ENCODE measurements at regions of chr9 and their contacts with region 1.

Region 1: DNA sequence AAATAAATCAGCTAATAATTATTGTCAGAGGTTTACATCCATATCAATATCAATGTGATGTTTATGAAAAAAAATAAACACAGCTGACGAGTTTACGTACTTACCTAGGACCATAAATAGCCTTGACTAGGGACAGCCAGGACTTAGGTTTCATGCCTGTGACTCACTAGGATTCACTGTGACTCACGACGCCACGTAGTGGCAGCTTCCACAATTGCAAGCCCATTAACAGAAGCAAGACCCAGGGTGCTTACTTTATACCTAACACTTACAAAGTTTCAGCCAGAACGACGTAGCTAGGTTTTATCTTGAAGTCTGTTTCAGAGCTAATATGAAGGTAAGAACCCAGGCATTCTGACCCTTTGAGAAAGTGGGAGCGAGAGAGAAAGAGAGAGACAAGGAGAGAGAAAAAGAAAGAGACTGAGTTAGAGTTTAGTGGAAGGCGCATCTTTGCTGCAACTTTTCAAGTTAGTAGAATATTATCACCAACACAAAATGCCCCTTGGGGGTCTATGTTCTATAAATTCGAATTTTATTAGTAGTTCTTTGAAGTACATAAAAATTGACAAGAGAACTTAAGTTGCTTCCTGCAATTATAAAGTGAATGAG is 191.2 kb downstream of the GNA14 start:
- DNase-seq: peak; percentile 90
- ATAC-seq: peak; percentile 77
- H3K4me3 Mint-ChIP-seq: no peak overlapping the region
- H3K27ac Mint-ChIP-seq: no peak overlapping the region
- H3K4me1 Mint-ChIP-seq: peaks cover 15% of the 10 kb centered on the region
- H3K27me3 Mint-ChIP-seq: no peaks in the 10 kb centered on the region

Region 2: GRCh38 chr9:77166193-77166592 is 290.7 kb before region 1 on chr9:
- CTCF ChIA-PET with region 1: interaction called, 15 read pairs
- DNase-seq: no peak
- ATAC-seq: no peak
- H3K4me3 Mint-ChIP-seq: no peak overlapping the region
- H3K27ac Mint-ChIP-seq: no peak overlapping the region
- H3K4me1 Mint-ChIP-seq: peaks cover 2% of the 10 kb centered on the region
- H3K27me3 Mint-ChIP-seq: peaks cover 6% of the 10 kb centered on the region

Region 3: GRCh38 chr9:77402286-77402685 is 54.6 kb before region 1 on chr9:
- CTCF ChIA-PET with region 1: no interaction called
- DNase-seq: no peak
- ATAC-seq: no peak
- H3K4me3 Mint-ChIP-seq: no peak overlapping the region
- H3K27ac Mint-ChIP-seq: no peak overlapping the region
- H3K4me1 Mint-ChIP-seq: no peaks in the 10 kb centered on the region
- H3K27me3 Mint-ChIP-seq: no peaks in the 10 kb centered on the region

Region 4: GRCh38 chr9:77433675-77434445 is 23.1 kb before region 1 on chr9:
- CTCF ChIA-PET with region 1: interaction called, 65 read pairs
- DNase-seq: peak; percentile 65
- ATAC-seq: peak; percentile 91
- H3K4me3 Mint-ChIP-seq: no peak overlapping the region
- H3K27ac Mint-ChIP-seq: no peak overlapping the region
- H3K4me1 Mint-ChIP-seq: peaks cover 4% of the 10 kb centered on the region
- H3K27me3 Mint-ChIP-seq: peaks cover 6% of the 10 kb centered on the region

Region 5: DNA sequence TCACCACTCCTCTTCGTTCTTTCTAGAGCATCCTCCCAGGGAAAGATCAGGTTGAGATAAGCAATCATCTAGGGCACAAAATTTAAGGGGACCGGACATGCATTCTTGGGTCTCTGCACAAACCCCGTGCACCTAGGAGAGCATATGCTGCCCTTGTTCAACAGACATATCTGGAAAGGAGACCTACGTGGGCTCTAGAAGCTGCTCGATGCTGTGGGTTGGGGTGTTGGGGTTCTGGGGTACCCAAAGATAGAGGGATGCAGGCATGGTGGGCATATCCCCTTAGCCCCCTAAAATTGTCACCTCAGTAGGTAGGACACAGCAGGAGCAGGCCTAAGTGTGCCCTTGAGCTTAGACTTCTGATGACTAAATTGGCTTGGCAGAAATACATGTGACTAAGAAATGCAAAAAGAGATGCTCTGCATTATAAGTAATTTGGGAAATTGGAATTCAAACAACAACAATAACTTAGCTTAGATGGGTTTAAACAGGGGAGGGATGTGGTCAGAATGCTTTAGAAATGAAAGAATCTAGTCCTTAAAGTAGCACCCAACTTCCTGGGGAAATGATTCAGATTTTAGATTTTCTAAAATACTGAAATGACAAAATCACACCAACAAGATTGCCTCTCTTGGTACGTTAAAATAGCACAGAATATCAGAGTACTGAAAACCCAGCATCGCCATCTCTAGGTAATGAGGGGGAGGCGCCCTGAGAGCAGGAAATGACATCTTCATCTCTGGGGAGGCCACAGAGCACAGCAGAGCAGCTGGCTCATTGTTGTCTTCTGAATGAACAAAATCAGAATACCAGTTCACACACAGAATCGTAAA is 18.9 kb after region 1 on chr9:
- CTCF ChIA-PET with region 1: interaction called, 57 read pairs
- DNase-seq: peak; percentile 86
- ATAC-seq: peak; percentile 100
- H3K4me3 Mint-ChIP-seq: peak overlapping the region; percentile 39
- H3K27ac Mint-ChIP-seq: peak overlapping the region; percentile 99
- H3K4me1 Mint-ChIP-seq: peaks cover 37% of the 10 kb centered on the region
- H3K27me3 Mint-ChIP-seq: no peaks in the 10 kb centered on the region

Region 6: DNA sequence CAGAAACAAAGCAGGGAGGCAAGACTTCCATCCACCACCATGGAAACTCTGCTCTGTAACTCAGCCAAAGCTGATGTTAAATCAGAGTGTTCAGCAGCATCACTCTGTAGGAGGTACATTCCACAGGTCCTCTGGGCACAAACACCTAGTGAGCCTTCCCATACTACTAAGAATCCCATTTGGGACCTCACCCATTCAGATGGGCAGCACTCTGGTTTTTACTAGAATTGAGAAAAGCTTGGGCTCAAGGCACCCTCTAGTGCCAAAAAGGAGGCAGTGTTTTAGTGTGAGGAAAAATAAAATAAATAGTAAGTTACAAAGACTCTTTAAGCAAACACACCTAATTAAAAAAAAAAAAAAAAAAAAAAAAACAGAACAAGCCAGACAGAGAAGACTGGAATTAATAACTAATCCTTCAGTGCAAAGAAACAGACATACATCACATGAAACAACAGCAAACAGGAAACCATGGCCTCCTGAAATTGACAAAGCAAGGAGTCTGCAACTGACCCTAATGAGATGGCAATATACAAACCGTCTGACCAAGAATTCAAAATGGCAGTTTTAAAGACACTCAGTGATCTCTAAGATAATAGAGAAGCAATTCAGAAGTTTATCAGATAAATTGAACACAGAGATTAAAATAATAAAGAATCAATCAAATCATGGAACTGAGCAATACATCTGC is 31.6 kb after region 1 on chr9:
- CTCF ChIA-PET with region 1: interaction called, 167 read pairs
- DNase-seq: no peak
- ATAC-seq: peak; percentile 73
- H3K4me3 Mint-ChIP-seq: peak overlapping the region; percentile 73
- H3K27ac Mint-ChIP-seq: peak overlapping the region; percentile 29
- H3K4me1 Mint-ChIP-seq: peaks cover 27% of the 10 kb centered on the region
- H3K27me3 Mint-ChIP-seq: peaks cover 6% of the 10 kb centered on the region